Panc1 (cell line): ENCODE measurements at regions of chr3 and their contacts with region 1.

Region 1: DNA sequence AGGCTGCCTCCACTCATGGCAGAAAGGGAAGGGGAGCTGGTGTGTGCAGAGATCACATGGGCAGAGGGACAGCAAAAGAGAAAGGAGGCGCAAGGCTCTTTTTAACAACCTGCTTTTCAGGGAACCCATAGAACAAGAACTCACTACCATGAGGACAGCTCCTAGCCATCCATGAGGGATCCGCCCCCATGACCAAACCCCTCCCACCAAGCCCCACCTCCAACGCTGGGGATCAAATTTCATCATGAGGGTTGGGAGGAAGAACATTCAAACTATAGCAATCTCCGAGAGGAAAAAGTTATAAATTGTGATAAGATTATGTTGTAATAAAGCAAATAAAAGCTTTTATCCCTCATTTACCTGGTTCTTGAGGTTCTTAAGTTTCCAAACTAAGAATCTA is 84.7 kb upstream of the LMCD1 start:
- DNase-seq: no peak
- ATAC-seq: no peak; the same call in 1 of the 2 replicates
- H3K4me3 ChIP-seq: no peak overlapping the region
- H3K27ac ChIP-seq: no peak overlapping the region
- H3K4me1 ChIP-seq: no peaks in the 10 kb centered on the region
- H3K27me3 ChIP-seq: no peaks in the 10 kb centered on the region
- CTCF ChIP-seq: no peak

Region 2: DNA sequence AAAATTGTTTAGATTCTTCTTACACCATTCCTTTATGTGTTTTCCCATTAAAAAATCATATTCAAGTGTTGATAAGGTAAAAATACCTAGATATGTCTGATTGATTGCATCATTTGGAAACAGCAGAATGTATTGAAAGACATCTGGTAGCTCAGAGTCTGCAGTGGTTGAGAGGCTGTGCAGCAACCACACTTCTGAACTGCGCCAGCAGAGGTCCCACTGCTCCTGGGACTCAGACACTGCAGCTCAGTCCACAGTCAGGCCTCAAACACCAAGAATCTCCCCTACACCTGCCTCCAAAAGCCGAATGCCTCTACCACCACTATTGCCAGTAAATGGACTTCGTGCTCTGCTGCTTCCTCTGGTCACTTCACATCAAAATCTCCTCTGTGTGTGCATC is 92.2 kb before region 1 on chr3:
- CTCF ChIA-PET with region 1: interaction called, 11 read pairs
- POLR2A ChIA-PET with region 1: no interaction called
- in situ Hi-C with region 1: no loop called
- intact Hi-C with region 1: loop called (anchors 5 kb)
- DNase-seq: peak; percentile 17
- ATAC-seq: no peak
- H3K4me3 ChIP-seq: no peak overlapping the region
- H3K27ac ChIP-seq: no peak overlapping the region
- H3K4me1 ChIP-seq: no peaks in the 10 kb centered on the region
- H3K27me3 ChIP-seq: no peaks in the 10 kb centered on the region
- CTCF ChIP-seq: peak; percentile 59

Region 3: DNA sequence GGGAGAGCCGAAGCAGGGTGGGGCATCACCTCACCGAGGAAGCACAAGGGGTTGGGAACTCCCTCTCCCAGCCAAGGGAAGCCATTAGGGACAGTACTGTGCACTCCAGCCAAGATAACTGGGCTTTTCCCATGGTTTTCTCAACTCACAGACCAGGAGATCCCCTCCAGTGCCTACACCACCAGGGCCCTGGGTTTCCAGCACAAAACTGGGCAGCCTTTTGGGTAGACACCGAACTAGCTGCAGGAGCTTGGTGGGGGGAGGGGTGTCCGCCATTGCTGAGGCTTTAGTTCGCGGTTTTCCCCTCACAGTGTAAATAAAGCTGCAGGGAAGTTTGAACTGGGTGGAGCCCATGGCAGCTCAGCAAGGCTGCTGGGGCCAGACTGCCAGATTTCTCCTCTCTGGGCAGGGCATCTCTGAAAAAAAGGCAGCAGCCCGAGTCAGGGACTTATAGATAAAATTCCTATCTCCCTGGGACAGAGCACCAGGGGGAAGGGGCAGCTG is 45.0 kb before region 1 on chr3:
- CTCF ChIA-PET with region 1: no interaction called
- POLR2A ChIA-PET with region 1: no interaction called
- in situ Hi-C with region 1: no loop called
- intact Hi-C with region 1: no loop called
- DNase-seq: no peak
- ATAC-seq: no peak
- H3K4me3 ChIP-seq: no peak overlapping the region
- H3K27ac ChIP-seq: no peak overlapping the region
- H3K4me1 ChIP-seq: no peaks in the 10 kb centered on the region
- H3K27me3 ChIP-seq: no peaks in the 10 kb centered on the region
- CTCF ChIP-seq: no peak

Region 4: GRCh38 chr3:8450621-8451020 is 33.7 kb after region 1 on chr3:
- CTCF ChIA-PET with region 1: no interaction called
- POLR2A ChIA-PET with region 1: no interaction called
- in situ Hi-C with region 1: no loop called
- intact Hi-C with region 1: no loop called
- DNase-seq: no peak
- ATAC-seq: no peak
- H3K4me3 ChIP-seq: no peak overlapping the region
- H3K27ac ChIP-seq: no peak overlapping the region
- H3K4me1 ChIP-seq: peaks cover 5% of the 10 kb centered on the region
- H3K27me3 ChIP-seq: no peaks in the 10 kb centered on the region
- CTCF ChIP-seq: no peak